ENCODE measurements at regions of chr6 and their contacts with region 1.

Region 1: DNA sequence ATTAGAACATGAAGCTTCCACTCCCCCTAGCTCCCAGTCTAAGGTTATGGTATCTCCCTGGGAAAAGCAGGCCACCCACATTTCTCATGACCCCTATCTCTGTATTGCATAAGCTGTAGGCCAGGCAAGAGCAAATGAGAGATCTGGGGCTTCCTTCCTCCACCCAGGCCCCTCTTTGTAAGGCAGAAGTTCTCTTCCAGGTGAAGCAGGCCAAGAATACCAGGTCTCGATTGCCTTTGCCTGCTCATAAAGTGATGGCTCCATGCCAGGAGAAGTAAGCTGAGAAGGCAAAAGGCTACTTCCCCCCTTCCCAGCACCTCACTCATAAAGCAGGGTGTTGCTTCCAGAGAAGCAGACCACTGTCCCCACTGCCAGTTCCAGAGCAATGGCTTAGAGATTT is 144.1 kb upstream of the KCNK16 start:
- DNase-seq: no peak
- ATAC-seq: no peak
- H3K4me3 ChIP-seq: no peak overlapping the region
- H3K27ac ChIP-seq: no peak overlapping the region
- H3K4me1 ChIP-seq: peaks cover 0 to 3% (median 0%) of the 10 kb centered on the region in 12 donors
- H3K27me3 ChIP-seq: no peaks in the 10 kb centered on the region
- CTCF ChIP-seq: no peak
- POLR2A ChIP-seq: no peak

Region 2: GRCh38 chr6:39449022-39449421 is 17.6 kb before region 1 on chr6:
- intact Hi-C with region 1: loop called in 1 of 10 experiments (anchors 2 kb)
- DNase-seq: no peak
- ATAC-seq: no peak
- H3K4me3 ChIP-seq: no peak overlapping the region
- H3K27ac ChIP-seq: no peak overlapping the region
- H3K4me1 ChIP-seq: no peaks in the 10 kb centered on the region
- H3K27me3 ChIP-seq: no peaks in the 10 kb centered on the region
- CTCF ChIP-seq: no peak
- POLR2A ChIP-seq: no peak

Region 3: GRCh38 chr6:40874495-40874894 is 1407.9 kb after region 1 on chr6:
- intact Hi-C with region 1: no loop called
- DNase-seq: no peak
- ATAC-seq: peak in 1 of 4 donors; percentile 33
- H3K4me3 ChIP-seq: no peak overlapping the region
- H3K27ac ChIP-seq: no peak overlapping the region
- H3K4me1 ChIP-seq: no peaks in the 10 kb centered on the region
- H3K27me3 ChIP-seq: no peaks in the 10 kb centered on the region
- CTCF ChIP-seq: no peak
- POLR2A ChIP-seq: no peak